HEK293T (cell line): ENCODE measurements at regions of chr9 and their contacts with region 1.

Region 1: DNA sequence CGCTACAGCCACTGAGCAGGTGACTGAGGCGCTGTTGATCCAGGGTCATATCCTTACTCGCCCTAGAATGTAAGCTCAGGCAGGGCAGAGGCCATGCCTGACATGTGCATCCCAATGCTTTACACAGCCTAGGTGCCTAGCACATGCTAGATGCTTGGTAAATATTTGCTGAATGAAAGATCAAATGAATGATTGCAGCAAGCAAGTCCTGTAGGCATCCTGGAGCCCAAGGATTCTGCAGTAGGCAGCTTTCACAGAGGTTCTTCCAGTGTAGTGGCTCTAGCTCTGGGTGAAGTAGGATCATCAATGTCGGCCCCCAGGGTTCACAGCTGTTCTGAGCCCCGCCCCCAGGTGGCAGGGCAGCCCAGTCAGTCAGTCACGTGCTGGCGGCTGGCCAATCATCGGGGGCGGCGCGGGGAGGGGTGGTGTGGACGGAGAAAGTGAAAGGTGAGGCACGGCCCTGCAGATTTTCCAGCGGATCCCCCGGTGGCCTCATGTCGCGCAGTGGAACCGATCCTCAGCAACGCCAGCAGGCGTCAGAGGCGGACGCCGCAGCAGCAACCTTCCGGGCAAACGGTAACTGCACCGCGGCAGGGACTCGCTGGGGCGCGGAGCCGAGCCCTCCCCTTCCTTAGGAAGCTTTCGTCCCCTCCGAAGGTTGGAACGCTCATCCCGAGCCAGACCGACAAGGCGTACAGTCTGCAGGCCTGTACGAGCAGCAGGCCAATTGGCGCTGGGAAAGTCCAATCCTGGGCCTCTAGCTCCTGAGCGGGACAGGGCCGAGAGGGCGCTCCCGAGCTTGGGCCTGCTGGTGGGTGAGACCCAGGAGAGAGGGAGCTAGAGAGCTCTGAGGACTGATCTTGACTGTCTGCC is at the start of gene GALT:
- DNase-seq: peak; percentile 95

Region 2: DNA sequence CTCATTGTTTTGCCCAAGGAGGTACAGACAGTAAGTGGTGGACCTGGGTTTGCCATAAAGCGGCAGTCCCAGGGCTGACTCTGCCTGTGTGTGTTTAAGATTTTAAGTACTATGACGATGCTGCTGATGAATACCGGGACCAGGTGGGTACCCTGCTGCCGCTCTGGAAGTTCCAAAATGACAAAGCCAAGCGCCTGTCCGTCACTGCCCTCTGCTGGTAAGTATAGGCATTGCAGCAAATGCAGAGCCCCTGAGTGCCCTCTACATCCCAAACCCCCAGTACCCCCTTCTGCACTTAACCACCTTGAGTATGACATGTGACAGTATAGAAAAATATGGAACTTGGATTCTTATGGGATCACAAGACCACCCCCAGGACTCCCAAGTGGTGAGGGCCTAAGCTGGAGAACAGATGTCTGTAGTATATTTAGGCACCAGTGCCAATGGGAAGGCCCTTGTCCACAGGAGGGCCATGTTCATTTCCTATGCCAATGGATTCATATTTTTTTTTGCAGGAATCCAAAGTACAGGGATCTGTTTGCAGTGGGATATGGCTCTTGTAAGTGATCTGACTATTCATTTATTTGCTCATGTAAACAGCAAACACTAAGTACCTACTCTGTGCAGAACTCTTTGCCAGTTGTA is 145.7 kb before region 1 on chr9:
- CTCF ChIA-PET with region 1: no interaction called
- POLR2A ChIA-PET with region 1: no interaction called
- DNase-seq: peak; percentile 81

Region 3: DNA sequence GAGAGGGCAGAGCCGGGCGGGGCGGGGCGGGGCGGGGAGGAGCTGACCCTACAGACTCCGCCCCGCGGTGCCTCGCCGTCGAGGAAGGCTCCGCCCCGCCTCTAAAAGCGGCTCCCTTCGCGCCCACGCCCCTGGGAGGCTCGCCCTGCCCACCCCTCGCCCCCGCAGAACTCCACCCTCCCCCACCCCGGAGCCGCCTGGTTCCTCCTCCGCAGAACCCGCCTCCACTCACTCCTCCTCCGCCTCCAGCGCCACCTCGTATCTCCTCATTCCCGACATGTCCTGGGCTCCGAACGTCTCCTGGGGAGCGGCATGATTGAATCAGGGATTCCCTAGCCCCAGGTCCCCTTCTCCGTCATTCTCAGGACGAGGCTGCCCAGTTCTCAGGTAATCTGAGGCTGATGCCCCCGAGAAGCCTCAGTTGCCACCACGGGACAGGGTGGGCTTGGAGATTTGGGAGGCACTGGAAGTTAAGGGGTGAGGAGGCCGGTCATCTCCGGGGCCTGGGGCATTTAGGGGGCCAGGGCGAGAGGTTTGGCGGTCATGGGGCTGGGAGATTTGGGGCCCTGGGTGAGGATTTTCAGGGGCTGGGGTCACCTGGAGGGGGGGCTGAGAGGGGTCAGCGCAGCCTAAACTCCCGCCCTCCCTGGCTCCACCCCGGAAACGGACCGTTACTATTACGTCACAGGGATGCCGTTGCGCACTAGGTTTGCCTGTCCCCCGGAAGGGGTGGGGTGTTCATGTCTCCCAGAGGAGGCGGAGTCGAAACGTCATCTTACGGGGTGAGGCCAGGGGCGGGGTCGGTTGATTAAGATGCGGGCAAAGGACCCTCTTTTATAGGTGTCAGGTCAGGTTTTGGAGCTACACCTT is 19.2 kb after region 1 on chr9:
- CTCF ChIA-PET with region 1: interaction called, 3 read pairs
- POLR2A ChIA-PET with region 1: interaction called, 11 read pairs
- DNase-seq: peak; percentile 96